CD8-positive, alpha-beta memory T cell (primary cell): ENCODE measurements at regions of chr17 and their contacts with region 1.

Region 1: DNA sequence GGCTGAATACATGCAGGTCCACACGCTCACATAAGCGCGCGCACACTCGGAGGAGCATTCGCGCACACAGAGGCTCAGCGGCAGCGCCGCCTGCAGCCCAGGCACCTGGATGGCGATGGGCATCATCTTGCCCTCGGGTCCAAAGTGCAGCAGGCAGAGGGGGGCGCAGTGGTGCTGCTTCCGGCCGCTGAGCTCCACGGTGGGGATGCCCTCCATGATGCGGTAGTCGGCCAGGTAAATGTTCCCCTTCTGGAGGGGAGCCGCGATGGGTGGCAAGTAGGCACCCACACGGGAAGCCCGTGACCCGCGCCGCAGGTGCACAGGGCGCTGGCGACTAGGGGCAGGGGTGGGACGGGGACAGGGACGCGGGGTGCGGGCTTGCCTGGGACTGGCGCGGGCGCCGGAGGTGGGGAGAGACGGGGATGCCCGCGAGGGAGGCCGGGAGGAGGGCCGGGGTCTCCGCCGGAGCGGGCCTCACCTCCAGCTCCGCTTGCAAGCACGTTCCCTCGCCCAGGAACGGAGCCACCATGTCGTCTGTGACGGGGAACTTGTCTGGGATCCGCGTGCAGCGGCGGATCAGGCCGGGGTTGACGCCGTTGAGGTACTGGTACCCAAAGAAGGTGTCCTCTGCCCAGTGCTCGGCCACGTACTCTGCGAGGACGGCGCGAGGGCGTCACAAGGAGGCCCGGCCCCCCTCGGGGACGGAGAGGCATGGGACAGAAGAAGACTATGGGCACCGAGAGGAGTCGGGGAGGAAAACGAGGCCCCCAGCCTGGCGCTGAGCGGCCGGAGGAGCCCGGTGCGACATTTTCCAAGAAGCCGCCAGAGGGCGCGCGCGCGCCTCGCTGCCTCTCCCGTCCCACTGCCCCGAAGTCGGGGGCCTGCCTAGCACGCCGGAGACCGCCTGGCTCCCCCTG is 8.0 kb downstream of the ALOX12B start:
- DNase-seq: peak; percentile 68 to 85 (median 72)
- H3K4me3 ChIP-seq: peak overlapping the region; percentile 78
- H3K4me3 Mint-ChIP-seq: peak overlapping the region; percentile 70 to 95 (median 92)
- H3K27ac ChIP-seq: peak overlapping the region; percentile 57
- H3K27ac Mint-ChIP-seq: peak overlapping the region; percentile 24 to 92 (median 84)
- H3K4me1 ChIP-seq: peaks cover 15% of the 10 kb centered on the region
- H3K4me1 Mint-ChIP-seq: peaks cover 4 to 20% (median 16%) of the 10 kb centered on the region in 3 donors
- H3K27me3 ChIP-seq: peaks cover 8% of the 10 kb centered on the region
- H3K27me3 Mint-ChIP-seq: peaks cover 7 to 10% of the 10 kb centered on the region in 2 donors

Region 2: GRCh38 chr17:8109661-8110464 is 30.3 kb after region 1 on chr17:
- CTCF ChIA-PET with region 1: interaction called, 25 read pairs
- POLR2A ChIA-PET with region 1: interaction called, 6 read pairs
- DNase-seq: peak; percentile 74 to 86 (median 76)
- H3K4me3 ChIP-seq: peak overlapping the region; percentile 65
- H3K4me3 Mint-ChIP-seq: peak overlapping the region in 5 of 7 donors; percentile 66 to 72 (median 69)
- H3K27ac ChIP-seq: no peak overlapping the region
- H3K27ac Mint-ChIP-seq: peak overlapping the region in 1 of 8 donors; percentile 23
- H3K4me1 ChIP-seq: no peaks in the 10 kb centered on the region
- H3K4me1 Mint-ChIP-seq: peaks cover 0 to 5% (median 2%) of the 10 kb centered on the region in 3 donors
- H3K27me3 ChIP-seq: peaks cover 27% of the 10 kb centered on the region
- H3K27me3 Mint-ChIP-seq: peaks cover 27 to 34% of the 10 kb centered on the region in 2 donors